ENCODE measurements at regions of chr3 and their contacts with region 1.

Region 1: GRCh38 chr3:177777699-177778098 is 580.4 kb upstream of the TBL1XR1 start:
- DNase-seq: peak in 7 of 10 donors; percentile 25 to 89 (median 57)

Region 2: GRCh38 chr3:177197041-177197727 is 580.5 kb before region 1 on chr3 and contains the start of gene TBL1XR1:
- intact Hi-C with region 1: loop called (anchors 5 kb)
- DNase-seq: peak; percentile 86 to 98 (median 92)

Region 3: GRCh38 chr3:177359593-177360357 is 417.9 kb before region 1 on chr3:
- intact Hi-C with region 1: loop called (anchors 2 kb)
- DNase-seq: peak; percentile 89 to 99 (median 93)

Region 4: GRCh38 chr3:177713928-177714900 is 63.5 kb before region 1 on chr3:
- intact Hi-C with region 1: no loop called
- DNase-seq: no peak

Measured in posterior cingulate gyrus (tissue), 11 donors.